T-cell (primary cell): ENCODE measurements at regions of chr1 and their contacts with region 1.

Region 1: GRCh38 chr1:222634180-222635013 is 16.5 kb downstream of the MIA3 start:
- DNase-seq: peak in 31 of 35 experiments; percentile 13 to 88 (median 54)
- ATAC-seq: peak; percentile 85 to 87 (median 86)
- H3K4me3 ChIP-seq: no peak overlapping the region
- H3K4me3 Mint-ChIP-seq: no peak overlapping the region
- H3K27ac ChIP-seq: no peak overlapping the region
- H3K27ac Mint-ChIP-seq: peak overlapping the region in 1 of 2 donors; percentile 9
- H3K4me1 ChIP-seq: no peaks in the 10 kb centered on the region
- H3K4me1 Mint-ChIP-seq: peaks cover 6 to 15% (median 8%) of the 10 kb centered on the region in 3 donors
- H3K27me3 ChIP-seq: no peaks in the 10 kb centered on the region
- H3K27me3 Mint-ChIP-seq: no peaks in the 10 kb centered on the region

Region 2: GRCh38 chr1:222465211-222466041 is 169.0 kb before region 1 on chr1:
- CTCF ChIA-PET with region 1: interaction called, 18 to 26 read pairs
- POLR2A ChIA-PET with region 1: no interaction called
- DNase-seq: peak; percentile 36 to 85 (median 64)
- ATAC-seq: peak; percentile 90 to 98 (median 92)
- H3K4me3 ChIP-seq: peak overlapping the region; percentile 15 to 38
- H3K4me3 Mint-ChIP-seq: peak overlapping the region; percentile 79 to 83 (median 80)
- H3K27ac ChIP-seq: peak overlapping the region; percentile 21
- H3K27ac Mint-ChIP-seq: peak overlapping the region; percentile 81 to 86
- H3K4me1 ChIP-seq: peaks cover 0 to 10% of the 10 kb centered on the region in 2 experiments
- H3K4me1 Mint-ChIP-seq: peaks cover 6 to 12% (median 11%) of the 10 kb centered on the region in 3 donors
- H3K27me3 ChIP-seq: peaks cover 0 to under 1% of the 10 kb centered on the region in 2 experiments
- H3K27me3 Mint-ChIP-seq: peaks cover 0 to 1% of the 10 kb centered on the region in 2 donors

Region 3: DNA sequence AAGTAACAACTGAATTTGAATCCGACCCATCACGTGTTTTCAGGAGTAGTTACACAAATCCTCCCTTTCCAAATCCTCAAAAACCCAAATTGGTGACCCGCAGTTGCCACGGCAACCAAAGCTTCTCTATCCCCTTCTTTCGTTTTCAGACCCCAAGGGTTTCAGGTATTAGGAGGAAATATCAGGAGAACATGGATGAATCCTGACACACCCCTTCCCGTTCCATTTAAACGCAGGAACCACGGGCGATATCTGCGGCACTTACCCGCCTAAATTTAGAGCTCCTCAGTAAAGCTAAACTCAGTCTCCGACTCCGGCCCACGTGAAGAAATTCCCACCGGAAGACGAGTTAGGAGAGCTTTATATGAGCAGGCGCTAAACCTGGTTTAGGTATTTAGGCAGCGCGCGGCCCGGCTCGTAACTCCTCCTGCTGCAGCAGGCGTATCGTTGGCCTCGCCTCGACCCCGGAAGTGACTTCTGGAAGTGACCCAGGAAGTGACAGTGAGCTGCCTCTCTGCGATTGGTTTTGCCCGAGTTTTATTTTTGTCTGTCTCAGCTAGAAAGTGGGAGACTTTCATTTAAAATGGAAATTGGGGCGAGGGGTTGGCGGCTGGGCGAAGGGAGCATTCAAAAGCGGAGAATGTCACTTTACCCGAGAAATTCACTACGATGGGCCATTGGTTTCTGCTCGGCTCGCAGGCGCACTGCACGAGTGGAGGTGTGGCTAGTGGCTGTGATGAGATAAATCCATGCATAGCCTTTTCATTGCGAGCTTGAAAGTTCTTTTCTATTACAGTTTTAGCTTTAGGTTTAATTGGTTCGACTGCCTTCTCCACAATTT is 44.7 kb before region 1 on chr1 and contains the start of gene TAF1A:
- CTCF ChIA-PET with region 1: interaction called, 6 to 15 read pairs
- POLR2A ChIA-PET with region 1: interaction called, 3 to 4 read pairs
- DNase-seq: peak; percentile 62 to 93 (median 85)
- ATAC-seq: peak; percentile 100
- H3K4me3 ChIP-seq: peak within 1 kb of the TSS; percentile 53 to 76
- H3K4me3 Mint-ChIP-seq: peak within 1 kb of the TSS; percentile 97 to 99 (median 97)
- H3K27ac ChIP-seq: peak within 1 kb of the TSS; percentile 83
- H3K27ac Mint-ChIP-seq: peak within 1 kb of the TSS; percentile 96 to 99
- H3K4me1 ChIP-seq: peaks cover 11 to 13% of the 10 kb centered on the region in 2 experiments
- H3K4me1 Mint-ChIP-seq: peaks cover 47 to 57% (median 48%) of the 10 kb centered on the region in 3 donors
- H3K27me3 ChIP-seq: no peaks in the 10 kb centered on the region
- H3K27me3 Mint-ChIP-seq: no peaks in the 10 kb centered on the region
- total RNA-seq, gene TAF1A: 5.7 to 14.0 (median 12.3) TPM

Region 4: DNA sequence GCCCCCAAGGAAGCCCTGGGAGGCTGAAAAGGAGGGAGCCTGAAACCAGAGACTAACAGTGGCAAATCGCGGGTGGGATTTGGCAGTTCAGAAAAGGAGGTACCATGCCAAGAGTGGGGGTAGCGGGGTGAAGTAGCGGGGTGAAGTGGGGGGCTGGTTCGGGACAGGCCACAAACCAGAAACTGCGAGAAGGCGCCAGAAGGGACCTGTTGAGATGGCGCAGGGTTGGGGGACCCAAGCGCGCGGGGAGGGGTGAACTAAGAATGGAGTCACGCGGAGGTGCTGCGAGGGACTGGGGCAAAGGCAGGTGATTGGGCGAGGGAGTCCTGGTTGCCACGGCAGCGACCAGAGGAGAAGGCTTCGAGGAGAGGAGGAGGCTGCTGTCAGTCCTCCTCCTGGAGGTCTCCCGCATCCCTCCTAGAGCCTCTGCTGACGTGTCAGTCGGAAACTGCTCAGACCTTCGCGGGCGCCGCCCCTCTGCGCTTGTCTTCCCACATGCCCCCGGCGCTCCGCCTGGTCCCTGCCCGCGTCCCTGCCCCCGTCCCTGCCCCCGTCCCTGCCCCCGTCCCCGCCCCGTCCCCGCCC is 16.9 kb before region 1 on chr1:
- CTCF ChIA-PET with region 1: interaction called, 12 to 29 read pairs
- POLR2A ChIA-PET with region 1: no interaction called
- DNase-seq: peak; percentile 68 to 97 (median 91)
- ATAC-seq: peak; percentile 89 to 93 (median 90)
- H3K4me3 ChIP-seq: peak overlapping the region; percentile 41 to 70
- H3K4me3 Mint-ChIP-seq: peak overlapping the region; percentile 85 to 91 (median 89)
- H3K27ac ChIP-seq: peak overlapping the region; percentile 83
- H3K27ac Mint-ChIP-seq: peak overlapping the region; percentile 87 to 92
- H3K4me1 ChIP-seq: peaks cover 13 to 18% of the 10 kb centered on the region in 2 experiments
- H3K4me1 Mint-ChIP-seq: peaks cover 30 to 33% (median 31%) of the 10 kb centered on the region in 3 donors
- H3K27me3 ChIP-seq: no peaks in the 10 kb centered on the region
- H3K27me3 Mint-ChIP-seq: peaks cover 18 to 21% of the 10 kb centered on the region in 2 donors

Region 5: GRCh38 chr1:222654849-222655248 is 20.5 kb after region 1 on chr1:
- CTCF ChIA-PET with region 1: interaction called in 1 of 2 experiments, 12 read pairs
- POLR2A ChIA-PET with region 1: interaction called in 1 of 2 experiments, 4 read pairs
- DNase-seq: peak in 34 of 35 experiments; percentile 50 to 92 (median 74)
- ATAC-seq: peak; percentile 98 to 100 (median 99)
- H3K4me3 ChIP-seq: no peak overlapping the region
- H3K4me3 Mint-ChIP-seq: peak overlapping the region; percentile 13 to 58 (median 46)
- H3K27ac ChIP-seq: peak overlapping the region; percentile 93
- H3K27ac Mint-ChIP-seq: peak overlapping the region; percentile 87 to 90
- H3K4me1 ChIP-seq: peaks cover 20 to 23% of the 10 kb centered on the region in 2 experiments
- H3K4me1 Mint-ChIP-seq: peaks cover 61 to 64% (median 62%) of the 10 kb centered on the region in 3 donors
- H3K27me3 ChIP-seq: no peaks in the 10 kb centered on the region
- H3K27me3 Mint-ChIP-seq: no peaks in the 10 kb centered on the region

Region 6: GRCh38 chr1:222713091-222713961 is 78.9 kb after region 1 on chr1:
- CTCF ChIA-PET with region 1: interaction called, 10 to 17 read pairs
- POLR2A ChIA-PET with region 1: no interaction called
- DNase-seq: peak; percentile 84 to 98 (median 93)
- ATAC-seq: peak; percentile 74 to 81 (median 74)
- H3K4me3 ChIP-seq: peak overlapping the region; percentile 89 to 100
- H3K4me3 Mint-ChIP-seq: peak overlapping the region; percentile 93 to 99 (median 96)
- H3K27ac ChIP-seq: peak overlapping the region; percentile 99
- H3K27ac Mint-ChIP-seq: peak overlapping the region; percentile 99 to 100
- H3K4me1 ChIP-seq: peaks cover 11 to 18% of the 10 kb centered on the region in 2 experiments
- H3K4me1 Mint-ChIP-seq: peaks cover 60 to 67% (median 62%) of the 10 kb centered on the region in 3 donors
- H3K27me3 ChIP-seq: no peaks in the 10 kb centered on the region
- H3K27me3 Mint-ChIP-seq: no peaks in the 10 kb centered on the region

Region 7: DNA sequence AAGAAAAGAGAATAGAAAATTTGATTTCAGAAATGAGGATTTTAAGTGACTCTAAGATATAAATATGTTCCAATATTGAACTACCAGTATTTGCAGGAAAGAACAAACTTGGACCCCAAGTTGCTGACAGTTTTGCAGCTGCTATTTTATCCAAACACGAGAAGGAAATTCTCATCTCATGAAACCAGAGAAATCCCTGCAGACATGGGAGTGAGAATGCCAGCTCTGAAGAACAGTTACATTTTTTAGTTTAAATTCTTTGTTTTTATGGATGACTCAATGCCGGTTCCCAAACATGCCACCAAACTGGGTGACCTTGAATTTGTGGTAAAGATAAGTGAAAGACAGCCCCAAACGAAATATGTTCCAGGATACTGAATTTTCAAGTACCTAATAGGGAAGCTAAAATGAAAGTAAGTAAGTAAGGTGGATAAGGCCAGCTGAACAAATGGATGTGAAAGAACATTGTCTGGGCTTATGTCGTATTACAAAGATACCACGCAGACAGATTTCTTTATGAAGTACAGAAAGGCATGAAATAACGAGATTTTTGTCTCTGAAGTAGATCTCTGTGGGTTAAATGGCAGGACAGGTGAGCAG is 488.7 kb after region 1 on chr1:
- CTCF ChIA-PET with region 1: no interaction called
- POLR2A ChIA-PET with region 1: no interaction called
- DNase-seq: no peak
- ATAC-seq: no peak
- H3K4me3 ChIP-seq: peak overlapping the region in 1 of 2 donors; percentile 9
- H3K4me3 Mint-ChIP-seq: peak overlapping the region; percentile 60 to 65 (median 63)
- H3K27ac ChIP-seq: no peak overlapping the region
- H3K27ac Mint-ChIP-seq: no peak overlapping the region
- H3K4me1 ChIP-seq: peaks cover 0 to 4% of the 10 kb centered on the region in 2 experiments
- H3K4me1 Mint-ChIP-seq: peaks cover 7 to 8% (median 8%) of the 10 kb centered on the region in 3 donors
- H3K27me3 ChIP-seq: no peaks in the 10 kb centered on the region
- H3K27me3 Mint-ChIP-seq: peaks cover 0 to 1% of the 10 kb centered on the region in 2 donors